IMR-90 (cell line): ENCODE measurements at regions of chr17 and their contacts with region 1.

Region 1: GRCh38 chr17:27236717-27237315 is 57.1 kb upstream of the WSB1 start:
- DNase-seq: peak; percentile 75
- ATAC-seq: peak; percentile 95
- H3K4me3 ChIP-seq: no peak overlapping the region
- H3K27ac ChIP-seq: no peak overlapping the region
- H3K4me1 ChIP-seq: peaks cover 1% of the 10 kb centered on the region; the same call in 1 of the 2 replicates
- H3K27me3 ChIP-seq: no peaks in the 10 kb centered on the region; the same call in 1 of the 2 replicates
- CTCF ChIP-seq: peak; percentile 91
- POLR2A ChIP-seq: 0 out of 2 replicates have a peak, but pooled peaks have one; percentile 37
- RAD21 ChIP-seq: peak; percentile 87

Region 2: GRCh38 chr17:27199948-27200347 is 36.9 kb before region 1 on chr17:
- CTCF ChIA-PET with region 1: interaction called, 3 read pairs
- POLR2A ChIA-PET with region 1: no interaction called
- dilution Hi-C with region 1: no loop called
- in situ Hi-C with region 1: no loop called
- intact Hi-C with region 1: loop called (anchors 5 kb)
- DNase-seq: peak; percentile 4
- ATAC-seq: no peak
- H3K4me3 ChIP-seq: no peak overlapping the region
- H3K27ac ChIP-seq: no peak overlapping the region
- H3K4me1 ChIP-seq: peaks cover 2% of the 10 kb centered on the region; the same call in 1 of the 2 replicates
- H3K27me3 ChIP-seq: peaks cover 3% of the 10 kb centered on the region; the same call in 1 of the 2 replicates
- CTCF ChIP-seq: no peak
- POLR2A ChIP-seq: no peak
- RAD21 ChIP-seq: no peak

Region 3: DNA sequence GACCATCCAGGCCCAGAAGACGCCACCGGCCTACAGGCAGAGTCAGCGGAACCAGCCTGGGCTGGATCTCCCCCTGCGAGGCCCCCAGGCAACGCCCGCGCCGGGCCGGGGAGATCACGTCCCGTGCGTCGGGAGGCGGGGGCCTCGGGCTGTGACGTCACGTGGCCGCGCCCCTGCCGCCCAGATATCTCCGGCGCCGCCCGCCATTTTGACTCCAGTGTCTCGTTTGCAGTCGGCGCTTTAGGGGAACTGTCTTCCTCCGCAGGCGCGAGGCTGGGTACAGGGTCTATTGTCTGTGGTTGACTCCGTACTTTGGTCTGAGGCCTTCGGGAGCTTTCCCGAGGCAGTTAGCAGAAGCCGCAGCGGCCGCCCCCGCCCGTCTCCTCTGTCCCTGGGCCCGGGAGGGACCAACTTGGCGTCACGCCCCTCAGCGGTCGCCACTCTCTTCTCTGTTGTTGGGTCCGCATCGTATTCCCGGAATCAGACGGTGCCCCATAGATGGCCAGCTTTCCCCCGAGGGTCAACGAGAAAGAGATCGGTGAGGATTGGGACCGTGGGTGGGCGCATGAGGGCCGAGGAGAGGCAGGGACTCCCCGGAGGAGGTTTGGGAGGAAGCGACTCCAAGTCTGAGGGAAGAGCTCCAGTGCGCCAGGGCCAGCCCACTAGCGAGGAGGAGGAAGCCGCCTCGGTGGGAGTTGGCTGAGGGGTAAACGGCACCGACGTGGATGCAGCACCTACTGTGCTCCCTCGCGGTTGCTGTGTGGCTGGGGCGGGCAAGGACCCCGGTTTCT is 57.3 kb after region 1 on chr17 and contains the start of gene WSB1:
- CTCF ChIA-PET with region 1: no interaction called
- POLR2A ChIA-PET with region 1: interaction called, 7 read pairs
- dilution Hi-C with region 1: no loop called
- in situ Hi-C with region 1: no loop called
- intact Hi-C with region 1: loop called (anchors 1 kb)
- DNase-seq: peak; percentile 89
- ATAC-seq: peak; percentile 86
- H3K4me3 ChIP-seq: peak within 1 kb of the TSS; percentile 83
- H3K27ac ChIP-seq: peak within 1 kb of the TSS; percentile 96
- H3K4me1 ChIP-seq: peaks cover 8% of the 10 kb centered on the region
- H3K27me3 ChIP-seq: no peaks in the 10 kb centered on the region
- CTCF ChIP-seq: 0 out of 2 replicates have a peak, but pooled peaks have one; percentile 1
- POLR2A ChIP-seq: peak; percentile 99
- RAD21 ChIP-seq: no peak
- total RNA-seq, gene WSB1: 112 and 140 TPM in 2 replicates

Region 4: DNA sequence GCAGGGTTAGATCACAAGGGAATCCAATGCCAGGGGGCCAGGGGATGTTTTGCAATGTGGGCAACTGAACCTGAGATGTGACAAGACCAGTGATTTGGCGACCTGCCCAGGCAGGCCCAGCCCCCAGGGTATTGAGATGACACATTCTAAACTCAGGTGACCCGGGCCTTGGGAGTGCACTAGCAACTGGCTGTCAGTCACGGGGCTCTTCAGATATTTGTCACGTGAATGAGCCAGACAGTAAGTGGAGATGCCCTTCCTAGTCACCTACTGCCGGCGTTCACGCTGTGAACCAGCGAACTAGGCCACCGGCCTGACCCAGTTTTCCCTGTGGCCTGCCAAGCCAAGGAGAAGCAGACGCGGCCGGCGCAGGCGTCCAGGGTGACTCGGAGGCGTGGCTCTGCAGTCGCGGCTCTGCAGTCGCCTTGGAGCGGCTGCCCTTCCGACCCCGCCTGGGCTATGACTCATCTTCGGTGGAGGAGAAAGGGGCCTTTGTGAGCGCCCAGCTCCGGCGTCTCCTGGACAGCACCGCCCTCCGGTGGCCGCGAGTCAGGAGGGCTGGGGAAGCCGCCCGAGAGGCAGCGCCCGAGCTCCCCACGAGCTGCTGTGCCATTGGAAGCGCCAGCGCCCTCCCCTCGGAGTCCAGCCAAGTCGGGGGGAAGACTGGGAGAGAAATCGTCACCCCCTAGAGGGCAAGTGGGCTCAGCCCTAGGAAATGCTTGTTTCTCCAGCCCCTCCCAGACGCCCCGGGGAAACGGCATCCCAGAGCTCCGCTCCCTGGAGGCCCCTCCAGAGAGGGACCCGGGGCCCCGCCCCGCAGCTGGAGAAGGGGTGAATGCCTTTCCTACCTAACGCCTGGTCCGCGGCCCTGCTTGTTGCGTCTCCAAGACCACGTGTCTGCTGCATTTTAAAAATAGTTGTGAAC is 95.9 kb after region 1 on chr17:
- CTCF ChIA-PET with region 1: interaction called, 44 read pairs
- POLR2A ChIA-PET with region 1: no interaction called
- dilution Hi-C with region 1: loop called (anchors 25 kb)
- in situ Hi-C with region 1: loop called (anchors 5 kb)
- intact Hi-C with region 1: loop called (anchors 1 kb)
- DNase-seq: peak; percentile 94
- ATAC-seq: peak; percentile 97
- H3K4me3 ChIP-seq: peak overlapping the region; percentile 40
- H3K27ac ChIP-seq: peak overlapping the region; percentile 48
- H3K4me1 ChIP-seq: peaks cover 4% of the 10 kb centered on the region; the same call in 1 of the 2 replicates
- H3K27me3 ChIP-seq: no peaks in the 10 kb centered on the region
- CTCF ChIP-seq: peak; percentile 96
- POLR2A ChIP-seq: peak; percentile 51
- RAD21 ChIP-seq: peak; percentile 96

Region 5: DNA sequence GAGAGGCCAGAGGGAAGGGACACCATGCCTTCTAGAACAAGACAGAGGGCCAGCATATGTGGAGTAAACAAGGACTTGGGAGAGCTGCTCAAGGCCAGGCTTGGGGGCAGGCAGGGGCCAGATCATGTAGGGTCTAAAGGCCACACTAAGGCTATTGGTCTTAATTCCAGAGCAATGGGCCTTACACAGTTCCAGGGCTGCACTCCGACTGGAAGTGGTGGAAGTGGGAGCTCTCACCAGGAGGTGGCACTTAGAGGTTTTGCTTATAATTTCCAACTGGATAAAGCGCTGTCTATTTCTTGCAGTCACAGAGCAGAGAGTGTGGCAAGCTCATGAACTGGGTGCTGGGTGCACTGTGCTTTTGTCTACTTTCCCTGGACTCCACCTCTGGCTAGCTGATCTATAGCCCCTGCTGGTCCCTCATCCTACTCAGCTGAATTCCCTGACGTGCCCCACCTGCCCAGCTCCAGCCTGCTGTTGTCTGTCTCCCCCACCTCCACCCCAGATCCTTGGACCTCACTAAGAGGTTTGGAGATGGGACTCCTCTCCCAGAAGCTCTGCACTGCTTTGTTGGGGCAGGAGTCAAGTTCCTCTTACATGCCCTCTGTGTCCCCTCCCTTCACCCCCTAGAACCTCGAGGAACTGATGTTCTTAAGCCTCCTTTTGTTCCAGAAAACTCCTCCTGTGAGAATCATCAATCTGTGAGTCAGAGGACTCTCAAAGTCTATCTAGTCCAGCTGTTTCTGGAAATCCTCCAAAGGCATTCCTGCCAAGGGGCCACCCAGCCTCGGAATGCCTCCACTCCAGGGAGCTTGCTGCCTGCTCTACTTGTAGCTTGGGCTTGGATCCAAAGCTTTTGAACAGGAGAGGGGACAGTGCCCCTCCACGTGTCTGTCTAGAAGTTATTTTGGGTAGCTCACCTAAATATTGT is 171.4 kb after region 1 on chr17:
- CTCF ChIA-PET with region 1: no interaction called
- POLR2A ChIA-PET with region 1: no interaction called
- dilution Hi-C with region 1: no loop called
- in situ Hi-C with region 1: no loop called
- intact Hi-C with region 1: no loop called
- DNase-seq: peak; percentile 51
- ATAC-seq: peak; percentile 83
- H3K4me3 ChIP-seq: no peak overlapping the region
- H3K27ac ChIP-seq: no peak overlapping the region
- H3K4me1 ChIP-seq: peaks cover 11% of the 10 kb centered on the region
- H3K27me3 ChIP-seq: no peaks in the 10 kb centered on the region; the same call in 1 of the 2 replicates
- CTCF ChIP-seq: no peak
- POLR2A ChIP-seq: no peak
- RAD21 ChIP-seq: no peak

Region 6: GRCh38 chr17:27601069-27601975 is 364.5 kb after region 1 on chr17:
- CTCF ChIA-PET with region 1: interaction called, 9 read pairs
- POLR2A ChIA-PET with region 1: no interaction called
- dilution Hi-C with region 1: no loop called
- in situ Hi-C with region 1: loop called (anchors 10 kb)
- intact Hi-C with region 1: loop called (anchors 1 kb)
- DNase-seq: peak; percentile 83
- ATAC-seq: peak; percentile 65
- H3K4me3 ChIP-seq: no peak overlapping the region
- H3K27ac ChIP-seq: no peak overlapping the region
- H3K4me1 ChIP-seq: peaks cover 2% of the 10 kb centered on the region; the same call in 1 of the 2 replicates
- H3K27me3 ChIP-seq: no peaks in the 10 kb centered on the region
- CTCF ChIP-seq: peak; percentile 97
- POLR2A ChIP-seq: peak; percentile 37; the same call in 1 of the 2 replicates
- RAD21 ChIP-seq: peak; percentile 97

Region 7: GRCh38 chr17:27630607-27631410 is 394.0 kb after region 1 on chr17 and contains the start of gene LGALS9:
- CTCF ChIA-PET with region 1: no interaction called
- POLR2A ChIA-PET with region 1: no interaction called
- dilution Hi-C with region 1: no loop called
- in situ Hi-C with region 1: loop called (anchors 10 kb)
- intact Hi-C with region 1: no loop called
- DNase-seq: peak; percentile 38
- ATAC-seq: peak; percentile 61
- H3K4me3 ChIP-seq: no peak within 1 kb of the TSS
- H3K27ac ChIP-seq: no peak within 1 kb of the TSS
- H3K4me1 ChIP-seq: peaks cover 10% of the 10 kb centered on the region
- H3K27me3 ChIP-seq: no peaks in the 10 kb centered on the region
- CTCF ChIP-seq: no peak
- POLR2A ChIP-seq: no peak
- RAD21 ChIP-seq: no peak
- total RNA-seq, gene LGALS9: 0.54 and 0.83 TPM in 2 replicates

Region 8: DNA sequence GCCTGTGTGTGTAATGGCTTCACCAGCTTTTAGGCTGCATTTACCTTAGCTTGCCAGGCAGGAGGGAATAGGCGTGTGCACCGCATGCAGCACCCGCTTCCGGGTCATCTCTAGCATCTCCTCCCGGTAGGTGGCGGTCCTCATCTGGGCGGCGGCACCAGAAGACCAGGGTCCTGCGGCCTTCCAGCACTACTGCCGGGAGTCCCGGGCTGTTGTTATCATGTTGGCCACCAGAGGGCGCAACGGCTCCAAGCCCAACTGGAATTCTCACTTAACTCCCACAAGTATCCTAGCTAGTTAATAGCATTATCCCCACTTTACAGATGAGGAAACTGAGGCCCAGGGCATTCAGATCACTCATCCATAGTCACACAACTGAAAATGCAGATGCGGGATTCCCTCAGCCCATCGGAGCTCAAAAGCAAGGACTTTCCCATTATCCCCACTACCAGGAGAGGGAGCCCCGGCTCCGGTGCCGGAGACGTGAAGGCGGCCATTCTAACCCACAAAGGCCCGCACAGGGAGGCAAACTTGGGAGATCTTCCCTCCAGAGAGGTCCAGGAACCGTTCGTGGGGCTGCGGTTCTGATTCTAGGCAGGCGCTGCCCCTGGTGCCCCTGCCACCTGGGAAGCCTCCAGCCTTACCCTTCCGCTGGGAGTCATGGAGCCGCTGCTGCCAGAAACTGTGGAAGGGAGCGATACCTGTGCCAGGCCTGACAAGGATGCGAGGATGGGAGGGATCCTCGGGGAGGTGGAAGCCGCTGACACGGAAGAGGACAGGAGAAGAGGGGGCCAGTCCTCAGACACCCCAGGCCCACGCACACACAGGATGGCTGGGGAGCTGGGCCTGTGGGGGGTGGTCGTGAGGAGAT is 418.1 kb after region 1 on chr17:
- CTCF ChIA-PET with region 1: no interaction called
- POLR2A ChIA-PET with region 1: no interaction called
- dilution Hi-C with region 1: no loop called
- in situ Hi-C with region 1: no loop called
- intact Hi-C with region 1: loop called (anchors 5 kb)
- DNase-seq: peak; percentile 45
- ATAC-seq: peak; percentile 75
- H3K4me3 ChIP-seq: no peak overlapping the region
- H3K27ac ChIP-seq: no peak overlapping the region
- H3K4me1 ChIP-seq: no peaks in the 10 kb centered on the region
- H3K27me3 ChIP-seq: peaks cover 2% of the 10 kb centered on the region; the same call in 1 of the 2 replicates
- CTCF ChIP-seq: peak; percentile 73
- POLR2A ChIP-seq: no peak
- RAD21 ChIP-seq: peak; percentile 52